GM13976 (cell line): ENCODE measurements at regions of chr5 and their contacts with region 1.

Region 1: GRCh38 chr5:2017540-2018389 is 135.0 kb upstream of the IRX4 start:
- DNase-seq: peak; percentile 71
- CTCF ChIP-seq: peak; percentile 33

Region 2: DNA sequence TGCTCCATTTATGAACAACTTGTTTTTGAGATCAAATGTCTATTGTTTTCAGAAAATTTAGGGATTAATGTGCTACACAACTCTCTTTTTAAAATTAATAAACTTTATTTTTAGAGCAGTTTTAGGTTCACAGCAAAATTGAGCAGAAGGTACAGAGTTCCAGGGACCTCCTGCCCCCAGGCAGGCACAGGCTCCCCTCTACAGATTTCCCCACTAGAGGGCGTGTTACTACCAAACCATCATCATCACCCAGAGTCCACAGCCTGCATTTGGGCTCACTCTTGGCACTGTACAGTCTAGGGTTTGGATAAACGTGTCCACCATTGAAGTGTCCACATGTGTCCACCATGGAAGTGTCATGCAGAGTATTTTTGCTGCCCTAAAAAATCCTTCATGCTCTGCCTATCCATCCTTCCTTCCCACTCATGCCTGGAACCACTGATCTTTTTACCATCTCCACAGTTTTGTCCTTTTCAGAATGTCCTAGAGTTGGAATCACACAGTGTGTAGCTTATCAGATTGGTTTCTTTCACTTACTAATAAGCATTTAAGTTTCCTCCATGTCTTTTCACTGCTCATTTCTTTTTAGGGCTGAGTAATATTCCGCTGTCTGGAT is 279.9 kb before region 1 on chr5:
- in situ Hi-C with region 1: loop called (anchors 25 kb)
- DNase-seq: peak; percentile 75
- CTCF ChIP-seq: peak; percentile 73

Region 3: DNA sequence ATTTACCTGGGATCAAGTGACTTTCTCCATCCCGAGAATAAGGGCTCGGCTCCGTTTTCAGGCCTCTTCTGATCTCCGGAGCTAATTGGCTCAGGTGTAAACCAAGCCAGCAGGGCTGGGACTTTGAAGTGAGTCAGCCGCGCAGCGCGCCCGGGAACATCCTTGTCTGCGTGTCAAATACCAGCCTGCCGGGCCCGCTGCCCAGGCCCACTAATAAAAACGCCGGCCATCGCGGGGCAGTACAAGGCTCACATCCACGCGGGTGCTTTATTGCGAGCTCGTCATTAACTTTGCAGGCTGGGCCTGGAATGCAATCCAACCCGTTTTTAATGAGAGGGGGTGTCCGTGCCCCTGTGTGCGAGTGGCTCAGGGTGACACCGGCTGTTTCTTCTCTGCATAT is 317.0 kb after region 1 on chr5:
- in situ Hi-C with region 1: no loop called
- DNase-seq: no peak
- CTCF ChIP-seq: no peak

Region 4: GRCh38 chr5:3451961-3452360 is 1434.2 kb after region 1 on chr5:
- in situ Hi-C with region 1: no loop called
- DNase-seq: no peak
- CTCF ChIP-seq: no peak